T-cell (primary cell): ENCODE measurements at regions of chr14 and their contacts with region 1.

Region 1: GRCh38 chr14:76352639-76353281 is 23.2 kb upstream of the ESRRB start:
- DNase-seq: peak in 31 of 35 experiments; percentile 2 to 62 (median 30)
- ATAC-seq: peak in 3 of 4 experiments; percentile 39 to 60 (median 39)
- H3K4me3 ChIP-seq: no peak overlapping the region
- H3K4me3 Mint-ChIP-seq: peak overlapping the region in 1 of 3 donors; percentile 20
- H3K27ac ChIP-seq: no peak overlapping the region
- H3K27ac Mint-ChIP-seq: no peak overlapping the region
- H3K4me1 ChIP-seq: peaks cover 0 to 6% of the 10 kb centered on the region in 2 experiments
- H3K4me1 Mint-ChIP-seq: peaks cover 0 to 6% (median 0%) of the 10 kb centered on the region in 3 donors
- H3K27me3 ChIP-seq: peaks cover 0 to 29% of the 10 kb centered on the region in 2 experiments
- H3K27me3 Mint-ChIP-seq: peaks cover 30 to 36% of the 10 kb centered on the region in 2 donors

Region 2: GRCh38 chr14:76050797-76051392 is 301.9 kb before region 1 on chr14:
- CTCF ChIA-PET with region 1: interaction called, 12 to 16 read pairs
- POLR2A ChIA-PET with region 1: no interaction called
- DNase-seq: peak in 34 of 35 experiments; percentile 3 to 74 (median 35)
- ATAC-seq: no peak
- H3K4me3 ChIP-seq: no peak overlapping the region
- H3K4me3 Mint-ChIP-seq: no peak overlapping the region
- H3K27ac ChIP-seq: no peak overlapping the region
- H3K27ac Mint-ChIP-seq: no peak overlapping the region
- H3K4me1 ChIP-seq: no peaks in the 10 kb centered on the region
- H3K4me1 Mint-ChIP-seq: no peaks in the 10 kb centered on the region
- H3K27me3 ChIP-seq: no peaks in the 10 kb centered on the region
- H3K27me3 Mint-ChIP-seq: no peaks in the 10 kb centered on the region

Region 3: GRCh38 chr14:76516884-76517283 is 164.1 kb after region 1 on chr14:
- CTCF ChIA-PET with region 1: no interaction called
- POLR2A ChIA-PET with region 1: no interaction called
- DNase-seq: no peak
- ATAC-seq: no peak
- H3K4me3 ChIP-seq: no peak overlapping the region
- H3K4me3 Mint-ChIP-seq: no peak overlapping the region
- H3K27ac ChIP-seq: no peak overlapping the region
- H3K27ac Mint-ChIP-seq: no peak overlapping the region
- H3K4me1 ChIP-seq: no peaks in the 10 kb centered on the region
- H3K4me1 Mint-ChIP-seq: no peaks in the 10 kb centered on the region
- H3K27me3 ChIP-seq: peaks cover 0 to 29% of the 10 kb centered on the region in 2 experiments
- H3K27me3 Mint-ChIP-seq: peaks cover 25 to 43% of the 10 kb centered on the region in 2 donors